ENCODE measurements at regions of chr2 and their contacts with region 1.

Region 1: GRCh38 chr2:37635504-37636380 is 35.7 kb downstream of the CDC42EP3 start:
- DNase-seq: peak; percentile 24 to 93 (median 53)
- ATAC-seq: peak; percentile 89
- H3K4me3 ChIP-seq: no peak overlapping the region
- H3K4me3 Mint-ChIP-seq: peak overlapping the region; percentile 8
- H3K27ac ChIP-seq: peak overlapping the region; percentile 70 to 75
- H3K27ac Mint-ChIP-seq: peak overlapping the region; percentile 88
- H3K4me1 ChIP-seq: peaks cover 47% of the 10 kb centered on the region
- H3K4me1 Mint-ChIP-seq: peaks cover 76% of the 10 kb centered on the region
- H3K27me3 ChIP-seq: no peaks in the 10 kb centered on the region
- H3K27me3 Mint-ChIP-seq: no peaks in the 10 kb centered on the region
- CTCF ChIP-seq: no peak

Region 2: DNA sequence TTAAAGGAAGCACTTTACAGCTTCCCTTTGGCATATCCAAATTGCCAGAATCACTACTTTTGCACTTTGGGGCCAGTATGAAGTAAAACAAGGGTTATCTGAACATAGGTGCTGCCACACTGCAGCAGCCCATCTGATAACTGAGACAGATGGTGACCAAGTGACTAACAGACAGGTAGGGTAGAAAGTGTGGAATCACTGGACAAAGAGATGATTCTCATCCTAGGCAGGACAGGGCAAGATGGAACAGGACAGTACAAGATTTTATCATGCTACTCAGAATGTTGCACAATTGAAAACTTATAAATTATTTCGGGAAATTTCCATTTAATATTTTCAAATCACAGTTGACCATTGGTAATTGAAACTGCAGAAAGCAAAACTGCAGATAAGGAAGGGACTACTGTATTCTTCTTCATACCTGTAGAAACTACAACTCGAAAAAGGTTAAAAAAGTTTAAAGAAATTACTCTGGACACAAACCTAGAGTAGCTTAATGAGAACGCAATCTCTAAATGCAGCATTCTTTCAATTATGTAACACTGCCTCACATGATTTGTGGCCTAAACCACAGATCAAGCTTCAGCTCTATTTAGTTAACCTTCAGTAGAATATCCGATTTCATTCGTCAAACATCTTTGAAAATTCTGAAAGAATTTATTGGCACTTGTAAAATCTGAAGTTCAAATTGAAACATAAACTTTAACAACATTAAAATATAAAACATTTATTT is 583.0 kb before region 1 on chr2:
- CTCF ChIA-PET with region 1: no interaction called
- POLR2A ChIA-PET with region 1: no interaction called
- intact Hi-C with region 1: no loop called
- DNase-seq: no peak
- ATAC-seq: no peak
- H3K4me3 ChIP-seq: no peak overlapping the region
- H3K4me3 Mint-ChIP-seq: no peak overlapping the region
- H3K27ac ChIP-seq: no peak overlapping the region
- H3K27ac Mint-ChIP-seq: no peak overlapping the region
- H3K4me1 ChIP-seq: no peaks in the 10 kb centered on the region
- H3K4me1 Mint-ChIP-seq: no peaks in the 10 kb centered on the region
- H3K27me3 ChIP-seq: no peaks in the 10 kb centered on the region
- H3K27me3 Mint-ChIP-seq: no peaks in the 10 kb centered on the region
- CTCF ChIP-seq: no peak

Region 3: DNA sequence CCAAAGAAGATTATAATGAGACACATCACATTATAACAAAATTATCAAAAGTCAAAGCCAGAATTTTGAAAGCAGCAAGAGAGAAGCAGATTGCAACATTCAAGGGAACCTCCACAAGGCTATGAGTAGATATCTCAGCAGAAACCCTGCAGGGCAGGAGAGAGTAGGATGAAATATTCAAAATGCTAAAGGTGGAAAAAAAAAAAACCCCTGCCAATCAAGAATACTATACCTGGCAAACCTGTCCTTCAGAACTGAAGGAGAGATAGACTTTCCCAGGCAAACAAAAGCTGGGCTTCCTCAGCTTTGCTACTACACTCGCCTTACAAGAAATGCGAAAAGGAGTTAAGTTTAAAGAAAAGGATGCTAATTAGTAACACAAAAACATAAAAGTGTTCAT is 29.5 kb before region 1 on chr2:
- CTCF ChIA-PET with region 1: no interaction called
- POLR2A ChIA-PET with region 1: no interaction called
- intact Hi-C with region 1: no loop called
- DNase-seq: no peak
- ATAC-seq: no peak
- H3K4me3 ChIP-seq: no peak overlapping the region
- H3K4me3 Mint-ChIP-seq: no peak overlapping the region
- H3K27ac ChIP-seq: no peak overlapping the region
- H3K27ac Mint-ChIP-seq: no peak overlapping the region
- H3K4me1 ChIP-seq: peaks cover 3% of the 10 kb centered on the region
- H3K4me1 Mint-ChIP-seq: peaks cover 29% of the 10 kb centered on the region
- H3K27me3 ChIP-seq: no peaks in the 10 kb centered on the region
- H3K27me3 Mint-ChIP-seq: no peaks in the 10 kb centered on the region
- CTCF ChIP-seq: no peak

Region 4: GRCh38 chr2:37623971-37624900 is 11.5 kb before region 1 on chr2:
- CTCF ChIA-PET with region 1: interaction called, 4 read pairs
- POLR2A ChIA-PET with region 1: interaction called, 7 read pairs
- intact Hi-C with region 1: loop called in 1 of 2 experiments (anchors 1 kb)
- DNase-seq: peak in 4 of 14 experiments; percentile 34 to 69 (median 62)
- ATAC-seq: peak; percentile 35
- H3K4me3 ChIP-seq: no peak overlapping the region
- H3K4me3 Mint-ChIP-seq: peak overlapping the region; percentile 61
- H3K27ac ChIP-seq: peak overlapping the region; percentile 0 to 71
- H3K27ac Mint-ChIP-seq: peak overlapping the region; percentile 85
- H3K4me1 ChIP-seq: peaks cover 59% of the 10 kb centered on the region
- H3K4me1 Mint-ChIP-seq: peaks cover 70% of the 10 kb centered on the region
- H3K27me3 ChIP-seq: no peaks in the 10 kb centered on the region
- H3K27me3 Mint-ChIP-seq: no peaks in the 10 kb centered on the region
- CTCF ChIP-seq: no peak

Region 5: GRCh38 chr2:37767956-37768925 is 132.5 kb after region 1 on chr2:
- CTCF ChIA-PET with region 1: no interaction called
- POLR2A ChIA-PET with region 1: no interaction called
- intact Hi-C with region 1: no loop called
- DNase-seq: no peak
- ATAC-seq: no peak
- H3K4me3 ChIP-seq: no peak overlapping the region
- H3K4me3 Mint-ChIP-seq: no peak overlapping the region
- H3K27ac ChIP-seq: no peak overlapping the region
- H3K27ac Mint-ChIP-seq: no peak overlapping the region
- H3K4me1 ChIP-seq: no peaks in the 10 kb centered on the region
- H3K4me1 Mint-ChIP-seq: no peaks in the 10 kb centered on the region
- H3K27me3 ChIP-seq: no peaks in the 10 kb centered on the region
- H3K27me3 Mint-ChIP-seq: no peaks in the 10 kb centered on the region
- CTCF ChIP-seq: no peak